Colonic mucosa (tissue), 4 donors: ENCODE measurements at regions of chr16 and their contacts with region 1.

Region 1: DNA sequence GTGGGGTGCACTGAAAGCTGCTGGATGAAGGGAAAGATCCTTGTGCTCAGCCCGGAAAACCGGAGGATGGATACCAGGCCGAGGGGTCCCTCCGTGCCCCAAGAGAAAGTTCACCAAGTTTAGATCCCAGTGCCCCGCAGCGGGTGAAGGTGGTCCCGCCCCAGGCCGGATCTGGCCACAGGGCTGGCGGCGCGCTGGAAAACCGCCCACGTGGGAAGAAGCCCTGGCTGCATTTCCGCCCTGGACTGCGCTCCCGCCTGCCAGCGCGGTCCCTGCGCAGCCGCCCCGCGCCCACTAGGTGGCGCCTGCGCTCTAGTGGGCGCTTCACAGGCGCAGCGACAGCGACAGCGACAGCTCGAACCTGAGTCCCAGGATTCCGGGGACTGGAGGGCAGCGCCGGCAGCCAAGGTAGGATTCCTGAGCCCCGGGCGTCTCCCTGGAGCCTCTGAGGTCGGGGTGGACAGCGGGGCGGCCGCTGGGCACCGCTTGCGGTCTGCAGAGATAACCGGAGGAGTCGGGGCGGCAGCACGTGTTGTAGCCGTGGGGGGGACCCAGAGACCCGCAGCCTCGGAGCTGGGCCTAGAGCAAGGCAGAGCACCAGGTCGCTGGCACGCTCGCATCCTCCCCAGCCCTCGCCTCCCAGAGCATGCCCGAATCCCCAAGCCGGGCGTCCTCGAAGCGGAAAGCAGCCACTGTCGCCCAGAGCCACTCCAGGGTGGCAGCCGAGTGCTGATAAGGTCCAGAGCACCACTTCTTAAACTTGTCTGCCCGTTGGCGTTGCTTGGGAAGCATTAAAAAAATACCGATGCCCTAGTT is at the start of gene CHD9:
- DNase-seq: peak; percentile 83
- H3K4me3 ChIP-seq: peak within 1 kb of the TSS; percentile 63
- H3K27ac ChIP-seq: peak within 1 kb of the TSS; percentile 83
- H3K4me1 ChIP-seq: peaks cover 7% of the 10 kb centered on the region
- H3K27me3 ChIP-seq: no peaks in the 10 kb centered on the region
- CTCF ChIP-seq: peak; percentile 100
- total RNA-seq, gene CHD9: 39.2 to 66.1 TPM

Region 2: GRCh38 chr16:52964290-52964689 is 90.6 kb before region 1 on chr16:
- intact Hi-C with region 1: no loop called
- DNase-seq: no peak
- H3K4me3 ChIP-seq: no peak overlapping the region
- H3K27ac ChIP-seq: no peak overlapping the region
- H3K4me1 ChIP-seq: no peaks in the 10 kb centered on the region
- H3K27me3 ChIP-seq: no peaks in the 10 kb centered on the region
- CTCF ChIP-seq: no peak

Region 3: DNA sequence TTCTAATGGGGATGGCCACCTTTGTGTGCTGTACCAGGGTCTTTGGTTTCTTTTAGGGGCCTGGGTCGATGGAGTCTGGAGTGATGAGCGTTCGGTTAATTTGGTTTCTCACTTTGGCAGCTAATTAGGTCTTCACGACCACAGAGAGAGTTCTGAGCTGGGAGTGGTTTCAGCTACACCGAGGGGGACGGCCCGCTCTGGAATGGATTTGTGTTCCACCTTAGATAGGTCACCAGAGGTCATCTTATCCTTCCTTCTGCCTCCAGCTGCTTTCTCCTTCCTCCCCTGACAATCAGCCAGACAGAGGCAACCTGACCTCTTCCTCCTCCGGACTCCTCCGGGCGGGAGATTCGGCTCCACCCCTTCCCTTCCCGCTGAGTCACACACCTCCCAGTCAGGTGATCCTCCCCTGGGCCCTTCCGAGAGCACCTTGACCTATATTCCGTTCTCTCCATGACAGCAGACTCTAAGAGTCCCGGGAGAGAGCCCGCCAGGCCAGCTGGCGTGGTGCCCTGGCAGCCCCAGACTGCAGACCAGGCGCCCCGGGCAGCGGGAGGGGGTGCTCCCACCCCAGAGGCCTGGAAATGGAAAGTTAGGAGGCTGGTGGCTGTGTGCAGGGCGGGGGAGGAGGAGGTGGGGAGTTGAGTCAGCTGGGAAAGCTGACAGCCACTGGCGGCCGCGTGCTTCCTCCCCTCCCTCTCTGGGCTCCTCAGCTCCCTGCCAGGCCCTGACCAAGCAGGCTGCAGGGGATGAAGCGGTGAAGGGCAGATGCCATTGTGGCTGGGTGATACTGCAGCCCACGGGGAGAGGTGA is 44.6 kb after region 1 on chr16:
- intact Hi-C with region 1: loop called (anchors 5 kb)
- DNase-seq: peak; percentile 95
- H3K4me3 ChIP-seq: peak overlapping the region; percentile 43
- H3K27ac ChIP-seq: peak overlapping the region; percentile 95
- H3K4me1 ChIP-seq: peaks cover 24% of the 10 kb centered on the region
- H3K27me3 ChIP-seq: no peaks in the 10 kb centered on the region
- CTCF ChIP-seq: no peak

Region 4: GRCh38 chr16:53130159-53131049 is 75.5 kb after region 1 on chr16:
- intact Hi-C with region 1: loop called (anchors 2 kb)
- DNase-seq: peak; percentile 96
- H3K4me3 ChIP-seq: peak overlapping the region; percentile 61
- H3K27ac ChIP-seq: peak overlapping the region; percentile 92
- H3K4me1 ChIP-seq: peaks cover 9% of the 10 kb centered on the region
- H3K27me3 ChIP-seq: no peaks in the 10 kb centered on the region
- CTCF ChIP-seq: peak; percentile 30

Region 5: GRCh38 chr16:53207810-53208752 is 153.2 kb after region 1 on chr16:
- intact Hi-C with region 1: loop called (anchors 5 kb)
- DNase-seq: peak; percentile 67
- H3K4me3 ChIP-seq: peak overlapping the region; percentile 10
- H3K27ac ChIP-seq: peak overlapping the region; percentile 75
- H3K4me1 ChIP-seq: peaks cover 7% of the 10 kb centered on the region
- H3K27me3 ChIP-seq: no peaks in the 10 kb centered on the region
- CTCF ChIP-seq: peak; percentile 32